ENCODE measurements at regions of chr2 and their contacts with region 1.

Region 1: DNA sequence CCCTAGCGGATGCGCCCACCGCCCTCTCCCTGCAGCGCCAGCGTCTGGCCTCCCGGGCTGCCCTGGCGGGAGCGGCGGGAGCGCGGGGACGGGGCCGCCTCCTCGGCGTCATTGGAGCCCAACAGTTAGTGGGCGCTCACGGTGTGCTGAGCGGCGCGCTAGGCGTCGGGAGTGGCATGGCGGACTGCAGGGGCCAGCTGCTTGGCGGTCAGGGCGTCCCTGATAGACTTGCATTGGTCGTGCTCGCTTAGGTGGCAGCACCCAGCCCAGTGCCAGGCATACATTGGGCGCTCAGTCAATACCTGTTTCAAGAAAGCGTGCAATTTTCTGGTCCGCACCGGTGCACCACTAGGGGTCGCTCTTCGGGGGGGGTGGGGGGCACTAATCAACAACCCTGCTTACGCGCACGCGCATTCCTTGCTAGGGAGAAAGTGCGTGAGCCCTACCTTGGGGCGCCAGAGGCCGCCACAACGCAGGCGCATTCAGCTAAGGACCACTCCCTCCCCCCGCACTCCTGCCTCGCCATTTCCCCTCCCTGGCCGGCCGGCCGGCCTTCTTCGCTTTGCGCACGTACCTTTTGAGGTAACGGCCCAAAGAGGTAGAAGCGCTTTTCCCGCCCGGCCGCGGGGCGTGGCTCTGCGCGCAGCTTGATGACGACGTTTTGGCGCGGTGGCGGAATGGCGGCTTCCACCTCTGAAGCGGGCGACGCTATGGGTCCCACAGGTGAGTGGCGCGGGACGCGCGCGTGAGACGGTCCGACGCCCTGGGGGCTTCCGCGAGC is 411 bp upstream of the MZT2A start:
- DNase-seq: peak; percentile 72 to 89
- H3K4me3 ChIP-seq: peak overlapping the region; percentile 87 to 98
- H3K27ac ChIP-seq: peak overlapping the region; percentile 77 to 86
- H3K4me1 ChIP-seq: peaks cover 2 to 6% of the 10 kb centered on the region in 2 donors
- H3K27me3 ChIP-seq: no peaks in the 10 kb centered on the region
- CTCF ChIP-seq: peak; percentile 38 to 77 (median 76)

Region 2: GRCh38 chr2:129877289-129877779 is 1615.3 kb before region 1 on chr2:
- intact Hi-C with region 1: loop called (anchors 5 kb)
- DNase-seq: peak; percentile 81 to 95
- H3K4me3 ChIP-seq: peak overlapping the region; percentile 82 to 86
- H3K27ac ChIP-seq: peak overlapping the region; percentile 75 to 80
- H3K4me1 ChIP-seq: peaks cover 0 to 11% of the 10 kb centered on the region in 2 donors
- H3K27me3 ChIP-seq: no peaks in the 10 kb centered on the region
- CTCF ChIP-seq: no peak

Region 3: GRCh38 chr2:130372055-130372832 is 1120.4 kb before region 1 on chr2:
- intact Hi-C with region 1: loop called (anchors 10 kb)
- DNase-seq: peak; percentile 38 to 94
- H3K4me3 ChIP-seq: peak overlapping the region; percentile 82 to 94
- H3K27ac ChIP-seq: peak overlapping the region; percentile 73 to 89
- H3K4me1 ChIP-seq: peaks cover 0 to 16% of the 10 kb centered on the region in 2 donors
- H3K27me3 ChIP-seq: no peaks in the 10 kb centered on the region
- CTCF ChIP-seq: peak; percentile 86 to 93 (median 87)

Region 4: GRCh38 chr2:131093006-131093695 is 399.5 kb before region 1 on chr2 and contains the start of gene FAM168B:
- intact Hi-C with region 1: loop called (anchors 5 kb)
- DNase-seq: peak; percentile 47 to 91
- H3K4me3 ChIP-seq: peak within 1 kb of the TSS; percentile 88 to 98
- H3K27ac ChIP-seq: peak within 1 kb of the TSS; percentile 88 to 98
- H3K4me1 ChIP-seq: peaks cover 0 to 15% of the 10 kb centered on the region in 2 donors
- H3K27me3 ChIP-seq: no peaks in the 10 kb centered on the region
- CTCF ChIP-seq: no peak
- total RNA-seq, gene FAM168B: 64.3 TPM

Region 5: GRCh38 chr2:131154071-131154531 is 338.5 kb before region 1 on chr2:
- intact Hi-C with region 1: loop called (anchors 5 kb)
- DNase-seq: no peak
- H3K4me3 ChIP-seq: no peak overlapping the region
- H3K27ac ChIP-seq: no peak overlapping the region
- H3K4me1 ChIP-seq: no peaks in the 10 kb centered on the region
- H3K27me3 ChIP-seq: no peaks in the 10 kb centered on the region
- CTCF ChIP-seq: peak; percentile 54 to 74 (median 64)

Region 6: DNA sequence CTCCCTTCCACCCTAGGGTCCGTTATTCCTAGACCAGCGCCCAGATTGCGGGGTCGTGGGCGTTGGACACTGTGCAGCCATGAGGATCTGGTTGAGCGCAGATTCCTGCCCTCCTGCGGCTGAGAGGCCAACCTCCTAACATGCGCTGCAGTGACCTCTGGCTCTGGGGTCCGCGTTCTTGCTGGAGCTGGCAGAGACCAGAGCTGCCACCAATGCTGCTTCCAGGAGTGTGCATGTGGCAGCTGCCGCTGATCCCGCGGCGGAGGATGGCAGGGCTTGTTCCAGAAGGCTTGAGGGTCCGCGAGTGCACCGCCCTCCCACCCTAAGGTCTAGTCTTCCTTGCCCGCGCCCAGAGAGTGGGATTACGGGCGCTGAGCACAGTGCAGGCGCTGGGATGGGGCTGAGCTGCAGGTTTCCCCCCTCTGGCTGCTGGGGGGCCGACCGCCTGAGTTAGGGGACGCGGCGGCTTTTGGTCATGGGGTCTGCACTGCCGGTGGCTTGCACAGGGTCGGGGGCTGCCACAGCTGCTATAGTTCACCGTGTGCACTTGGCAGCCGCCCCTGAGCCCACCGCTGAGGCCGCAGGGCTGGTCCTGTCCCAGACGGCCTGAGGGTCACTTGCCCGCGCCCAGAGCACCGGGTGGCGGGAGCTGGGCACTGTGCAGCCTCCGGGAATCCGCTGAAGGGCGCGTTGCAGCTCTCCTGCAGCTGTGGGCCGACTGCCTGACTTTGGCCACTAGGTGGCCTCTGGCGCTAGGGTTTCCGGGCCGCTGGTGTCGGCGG is 181.0 kb after region 1 on chr2:
- intact Hi-C with region 1: loop called (anchors 10 kb)
- DNase-seq: peak in 1 of 2 donors; percentile 87
- H3K4me3 ChIP-seq: peak overlapping the region; percentile 44 to 61
- H3K27ac ChIP-seq: no peak overlapping the region
- H3K4me1 ChIP-seq: peaks cover 0 to 16% of the 10 kb centered on the region in 2 donors
- H3K27me3 ChIP-seq: no peaks in the 10 kb centered on the region
- CTCF ChIP-seq: peak; percentile 80 to 95 (median 89)

Measured in ascending aorta (tissue), 2 donors.